ENCODE measurements at regions of chr15 and their contacts with region 1.

Region 1: DNA sequence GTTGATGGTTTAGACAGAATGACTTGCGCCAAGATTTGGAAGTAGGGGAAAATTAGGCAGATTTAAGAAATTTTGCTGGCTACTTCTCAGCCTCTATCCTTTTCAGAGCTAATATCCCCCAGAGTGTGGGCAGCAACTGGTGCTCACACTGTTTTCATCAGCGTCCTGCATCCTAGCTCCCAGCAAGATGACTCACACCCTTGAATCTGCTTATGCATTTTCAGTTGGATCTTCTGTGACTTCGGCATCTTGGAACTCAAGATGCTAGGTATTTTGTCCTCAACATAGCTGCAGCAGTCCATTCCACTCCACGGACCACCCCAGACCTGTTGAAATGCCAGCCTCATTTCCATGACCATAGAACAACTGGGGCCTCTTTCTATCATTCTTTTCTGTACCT is 336.1 kb upstream of the NR2F2 start:
- DNase-seq: no peak
- H3K4me3 ChIP-seq: no peak overlapping the region
- H3K27ac ChIP-seq: no peak overlapping the region
- H3K4me1 ChIP-seq: peaks cover 0 to 18% (median 16%) of the 10 kb centered on the region in 4 donors
- H3K27me3 ChIP-seq: no peaks in the 10 kb centered on the region
- CTCF ChIP-seq: no peak
- EP300 ChIP-seq: no peak
- POLR2A ChIP-seq: no peak

Region 2: DNA sequence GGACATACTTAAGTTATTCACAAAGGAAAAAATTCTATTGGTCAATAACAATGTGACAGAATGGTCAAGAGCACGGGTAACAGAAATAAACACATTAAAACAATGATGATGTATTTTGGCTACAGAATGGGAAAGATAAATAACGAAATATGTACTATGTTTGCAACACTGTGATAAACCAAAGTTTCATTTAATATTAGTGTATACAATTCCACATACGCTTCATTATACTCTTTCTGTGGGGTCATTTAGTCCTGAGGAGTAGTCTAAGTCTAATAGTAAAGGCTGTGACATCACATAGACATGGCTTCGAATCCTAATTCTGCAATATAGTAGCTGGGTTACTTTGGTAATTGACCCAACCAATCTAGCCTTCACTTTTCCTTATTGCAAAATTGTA is 1354.7 kb before region 1 on chr15:
- intact Hi-C with region 1: loop called (anchors 5 kb)
- DNase-seq: no peak
- H3K4me3 ChIP-seq: no peak overlapping the region
- H3K27ac ChIP-seq: no peak overlapping the region
- H3K4me1 ChIP-seq: no peaks in the 10 kb centered on the region
- H3K27me3 ChIP-seq: no peaks in the 10 kb centered on the region
- CTCF ChIP-seq: no peak
- EP300 ChIP-seq: no peak
- POLR2A ChIP-seq: no peak

Region 3: DNA sequence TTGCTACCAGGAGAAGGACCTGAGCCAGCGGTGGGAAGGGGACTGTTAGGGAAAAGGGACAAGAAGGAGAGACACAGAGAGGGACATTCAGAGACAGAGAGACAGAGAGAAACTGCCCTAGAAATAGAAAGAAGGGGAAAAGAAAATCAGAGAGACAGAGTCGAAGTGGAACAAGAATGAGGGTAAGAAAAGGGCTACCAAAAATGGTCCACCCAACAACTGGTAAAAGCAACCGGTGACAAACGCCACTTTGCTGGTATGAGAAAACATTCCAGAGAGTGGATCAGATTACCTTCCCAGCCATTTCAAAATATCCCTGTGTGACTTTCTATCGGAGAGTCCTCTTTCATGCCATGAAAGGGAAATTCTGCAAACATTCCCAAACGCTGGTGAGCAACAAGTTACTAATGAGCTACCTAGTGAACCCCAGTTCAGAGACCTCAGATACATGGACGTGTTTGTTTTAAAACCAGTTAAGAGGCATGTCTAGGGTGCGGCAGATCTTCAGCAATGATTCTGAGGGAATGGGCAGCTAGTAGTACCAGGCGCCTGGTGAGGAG is 82.3 kb before region 1 on chr15:
- intact Hi-C with region 1: loop called (anchors 10 kb)
- DNase-seq: no peak
- H3K4me3 ChIP-seq: no peak overlapping the region
- H3K27ac ChIP-seq: no peak overlapping the region
- H3K4me1 ChIP-seq: no peaks in the 10 kb centered on the region
- H3K27me3 ChIP-seq: no peaks in the 10 kb centered on the region
- CTCF ChIP-seq: no peak
- EP300 ChIP-seq: no peak
- POLR2A ChIP-seq: no peak